ENCODE measurements at regions of chr5 and their contacts with region 1.

Region 1: DNA sequence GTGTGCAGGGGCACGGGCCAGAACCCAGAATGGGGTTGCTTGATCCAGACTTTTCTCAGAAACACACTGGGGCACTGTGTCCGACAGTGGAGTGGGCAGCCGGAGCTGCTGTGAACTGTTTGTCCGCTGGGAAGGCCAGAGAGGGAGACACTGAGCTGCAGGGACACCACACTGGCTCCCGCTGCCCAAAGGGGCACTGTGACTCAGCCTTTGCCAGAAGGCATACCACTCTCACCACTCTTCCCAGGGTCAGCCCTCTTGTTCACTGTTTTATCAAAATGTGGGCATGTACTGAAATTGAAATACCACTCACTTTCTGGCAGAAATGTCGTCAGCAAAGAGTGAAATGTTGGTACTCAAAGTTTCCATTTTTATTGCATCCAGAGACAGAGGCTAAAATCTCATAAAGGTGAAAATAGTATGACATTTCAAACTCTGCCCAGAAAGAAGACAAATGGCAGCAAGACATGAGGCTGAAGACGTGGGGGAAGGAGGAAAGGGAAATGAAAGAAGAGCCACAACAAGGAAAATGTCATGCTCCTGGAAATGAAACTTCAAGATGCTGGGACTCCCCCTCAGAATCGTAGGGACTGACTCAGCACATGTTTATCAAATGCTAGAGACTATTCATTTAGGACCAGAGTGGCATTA is 4.5 kb upstream of the IL7R start:
- DNase-seq: peak in 6 of 9 donors; percentile 42 to 74 (median 56)
- ATAC-seq: no peak
- H3K4me3 ChIP-seq: peak overlapping the region; percentile 55
- H3K4me3 Mint-ChIP-seq: peak overlapping the region; percentile 85 to 100 (median 92)
- H3K27ac ChIP-seq: peak overlapping the region; percentile 98
- H3K27ac Mint-ChIP-seq: peak overlapping the region; percentile 97 to 100 (median 99)
- H3K4me1 ChIP-seq: peaks cover 52 to 56% of the 10 kb centered on the region in 2 donors
- H3K4me1 Mint-ChIP-seq: peaks cover 31 to 89% (median 72%) of the 10 kb centered on the region in 7 donors
- H3K27me3 ChIP-seq: no peaks in the 10 kb centered on the region
- H3K27me3 Mint-ChIP-seq: no peaks in the 10 kb centered on the region

Region 2: GRCh38 chr5:35651002-35651756 is 201.0 kb before region 1 on chr5:
- CTCF ChIA-PET with region 1: interaction called, 11 read pairs
- POLR2A ChIA-PET with region 1: no interaction called
- intact Hi-C with region 1: no loop called
- DNase-seq: peak; percentile 10 to 71 (median 64)
- ATAC-seq: peak; percentile 82
- H3K4me3 ChIP-seq: no peak overlapping the region
- H3K4me3 Mint-ChIP-seq: no peak overlapping the region
- H3K27ac ChIP-seq: no peak overlapping the region
- H3K27ac Mint-ChIP-seq: peak overlapping the region in 5 of 9 donors; percentile 2 to 74 (median 42)
- H3K4me1 ChIP-seq: peaks cover 0 to 6% of the 10 kb centered on the region in 2 donors
- H3K4me1 Mint-ChIP-seq: peaks cover 0 to 16% (median 11%) of the 10 kb centered on the region in 7 donors
- H3K27me3 ChIP-seq: no peaks in the 10 kb centered on the region
- H3K27me3 Mint-ChIP-seq: no peaks in the 10 kb centered on the region

Region 3: GRCh38 chr5:35777358-35778087 is 74.7 kb before region 1 on chr5:
- CTCF ChIA-PET with region 1: interaction called, 128 read pairs
- POLR2A ChIA-PET with region 1: interaction called, 979 read pairs
- intact Hi-C with region 1: loop called (anchors 1 kb)
- DNase-seq: peak; percentile 35 to 76 (median 67)
- ATAC-seq: peak; percentile 83
- H3K4me3 ChIP-seq: peak overlapping the region; percentile 14
- H3K4me3 Mint-ChIP-seq: peak overlapping the region; percentile 6 to 85 (median 74)
- H3K27ac ChIP-seq: peak overlapping the region; percentile 52
- H3K27ac Mint-ChIP-seq: peak overlapping the region; percentile 76 to 99 (median 92)
- H3K4me1 ChIP-seq: peaks cover 39 to 50% of the 10 kb centered on the region in 2 donors
- H3K4me1 Mint-ChIP-seq: peaks cover 19 to 87% (median 62%) of the 10 kb centered on the region in 7 donors
- H3K27me3 ChIP-seq: no peaks in the 10 kb centered on the region
- H3K27me3 Mint-ChIP-seq: no peaks in the 10 kb centered on the region

Region 4: GRCh38 chr5:35830587-35830986 is 21.6 kb before region 1 on chr5:
- CTCF ChIA-PET with region 1: interaction called, 14 read pairs
- POLR2A ChIA-PET with region 1: interaction called, 1,069 read pairs
- intact Hi-C with region 1: loop called (anchors 1 kb)
- DNase-seq: peak in 7 of 9 donors; percentile 77 to 92 (median 89)
- ATAC-seq: peak; percentile 94
- H3K4me3 ChIP-seq: peak overlapping the region; percentile 4
- H3K4me3 Mint-ChIP-seq: peak overlapping the region; percentile 1 to 78 (median 70)
- H3K27ac ChIP-seq: peak overlapping the region; percentile 59
- H3K27ac Mint-ChIP-seq: peak overlapping the region; percentile 82 to 98 (median 89)
- H3K4me1 ChIP-seq: peaks cover 69 to 78% of the 10 kb centered on the region in 2 donors
- H3K4me1 Mint-ChIP-seq: peaks cover 53 to 99% (median 90%) of the 10 kb centered on the region in 7 donors
- H3K27me3 ChIP-seq: no peaks in the 10 kb centered on the region
- H3K27me3 Mint-ChIP-seq: no peaks in the 10 kb centered on the region

Region 5: DNA sequence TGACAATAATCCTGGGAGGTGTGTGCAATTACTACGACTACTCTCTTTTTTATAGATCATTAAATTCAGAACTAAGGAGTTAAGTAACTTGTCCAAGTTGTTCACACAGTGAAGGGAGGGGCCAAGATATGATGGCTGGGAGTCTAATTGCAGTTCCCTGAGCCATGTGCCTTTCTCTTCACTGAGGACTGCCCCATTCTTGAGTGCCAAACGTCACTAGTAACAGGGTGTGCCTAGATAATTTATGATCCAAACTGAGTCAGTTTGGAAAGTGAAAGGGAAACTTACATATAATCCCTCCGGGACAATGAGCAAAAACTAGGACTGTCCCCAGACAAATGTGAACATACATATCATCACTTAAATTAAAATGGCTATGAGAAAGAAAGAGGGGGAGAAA is 24.7 kb after region 1 on chr5:
- CTCF ChIA-PET with region 1: no interaction called
- POLR2A ChIA-PET with region 1: interaction called, 357 read pairs
- intact Hi-C with region 1: no loop called
- DNase-seq: no peak
- ATAC-seq: no peak
- H3K4me3 ChIP-seq: no peak overlapping the region
- H3K4me3 Mint-ChIP-seq: peak overlapping the region in 8 of 10 donors; percentile 5 to 73 (median 47)
- H3K27ac ChIP-seq: peak overlapping the region; percentile 27
- H3K27ac Mint-ChIP-seq: peak overlapping the region; percentile 24 to 87 (median 72)
- H3K4me1 ChIP-seq: peaks cover 25 to 62% of the 10 kb centered on the region in 2 donors
- H3K4me1 Mint-ChIP-seq: peaks cover 51 to 99% (median 94%) of the 10 kb centered on the region in 7 donors
- H3K27me3 ChIP-seq: no peaks in the 10 kb centered on the region
- H3K27me3 Mint-ChIP-seq: no peaks in the 10 kb centered on the region

Region 6: DNA sequence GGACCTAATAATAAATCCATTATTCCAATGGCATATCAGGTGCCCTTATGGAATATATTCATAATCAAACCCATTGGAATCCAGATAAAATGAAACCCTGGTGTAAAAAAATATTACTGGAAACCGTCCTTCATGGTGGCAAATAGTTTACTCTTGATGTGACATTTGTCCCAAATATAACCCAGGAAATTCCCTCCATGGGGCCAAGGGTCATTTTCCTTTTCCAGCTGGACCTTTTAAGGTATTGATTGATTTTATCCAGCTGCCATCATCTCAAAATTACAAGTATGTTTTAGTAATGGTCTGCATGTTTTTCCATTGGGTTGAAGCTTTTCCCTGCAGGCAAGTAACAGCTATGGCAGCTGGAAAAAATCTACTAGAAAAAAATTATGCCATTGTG is 147.3 kb after region 1 on chr5:
- CTCF ChIA-PET with region 1: no interaction called
- POLR2A ChIA-PET with region 1: no interaction called
- intact Hi-C with region 1: no loop called
- DNase-seq: no peak
- ATAC-seq: no peak
- H3K4me3 ChIP-seq: no peak overlapping the region
- H3K4me3 Mint-ChIP-seq: no peak overlapping the region
- H3K27ac ChIP-seq: no peak overlapping the region
- H3K27ac Mint-ChIP-seq: no peak overlapping the region
- H3K4me1 ChIP-seq: no peaks in the 10 kb centered on the region
- H3K4me1 Mint-ChIP-seq: no peaks in the 10 kb centered on the region
- H3K27me3 ChIP-seq: no peaks in the 10 kb centered on the region
- H3K27me3 Mint-ChIP-seq: peaks cover 0 to 25% (median 7%) of the 10 kb centered on the region in 5 donors

Region 7: GRCh38 chr5:37111426-37112382 is 1259.5 kb after region 1 on chr5:
- CTCF ChIA-PET with region 1: no interaction called
- POLR2A ChIA-PET with region 1: no interaction called
- intact Hi-C with region 1: loop called in 1 of 2 experiments (anchors 2 kb)
- DNase-seq: peak in 7 of 9 donors; percentile 42 to 73 (median 62)
- ATAC-seq: peak; percentile 86
- H3K4me3 ChIP-seq: peak overlapping the region; percentile 19
- H3K4me3 Mint-ChIP-seq: peak overlapping the region; percentile 42 to 83 (median 72)
- H3K27ac ChIP-seq: peak overlapping the region; percentile 47
- H3K27ac Mint-ChIP-seq: peak overlapping the region; percentile 6 to 88 (median 48)
- H3K4me1 ChIP-seq: peaks cover 14 to 30% of the 10 kb centered on the region in 2 donors
- H3K4me1 Mint-ChIP-seq: peaks cover 33 to 50% (median 43%) of the 10 kb centered on the region in 7 donors
- H3K27me3 ChIP-seq: no peaks in the 10 kb centered on the region
- H3K27me3 Mint-ChIP-seq: no peaks in the 10 kb centered on the region

Measured in naive thymus-derived CD4-positive, alpha-beta T cell (primary cell).